Ascending aorta (tissue), 2 donors: ENCODE measurements at regions of chr11 and their contacts with region 1.

Region 1: DNA sequence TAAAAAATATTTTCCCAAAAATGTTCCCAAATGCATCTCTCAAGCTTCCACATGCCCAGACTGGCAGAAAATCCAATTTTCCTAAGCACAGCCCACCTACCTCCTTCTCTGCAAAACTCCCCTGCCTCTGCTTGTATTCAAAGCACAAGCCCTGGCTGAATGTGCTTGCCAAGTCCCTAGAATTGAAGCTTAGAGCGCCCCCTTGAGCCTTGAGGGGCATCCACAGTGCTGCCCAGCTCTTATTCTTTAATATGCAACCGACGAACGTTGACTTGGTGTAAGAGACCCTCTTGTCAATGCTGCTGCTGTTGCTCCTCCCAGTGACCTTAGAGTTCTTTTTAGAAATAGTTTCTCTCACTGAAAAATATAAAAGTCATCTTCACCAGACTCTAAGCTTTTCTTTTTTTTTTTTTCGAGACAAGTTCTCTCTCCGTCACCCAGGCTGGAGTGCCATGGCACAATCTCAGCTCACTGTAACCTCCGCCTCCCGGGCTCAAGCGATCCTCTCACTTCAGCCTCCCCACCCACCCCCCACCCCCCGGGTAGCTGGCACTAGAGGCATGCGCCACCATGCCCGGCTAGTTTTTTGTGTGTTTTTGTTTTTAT is 63.5 kb upstream of the CAPRIN1 start:
- DNase-seq: peak; percentile 27 to 74
- H3K4me3 ChIP-seq: no peak overlapping the region
- H3K27ac ChIP-seq: no peak overlapping the region
- H3K4me1 ChIP-seq: no peaks in the 10 kb centered on the region
- H3K27me3 ChIP-seq: no peaks in the 10 kb centered on the region
- CTCF ChIP-seq: peak; percentile 56 to 74 (median 59)

Region 2: GRCh38 chr11:33808228-33808828 is 179.8 kb before region 1 on chr11:
- intact Hi-C with region 1: loop called (anchors 5 kb)
- DNase-seq: peak in 1 of 2 donors; percentile 91
- H3K4me3 ChIP-seq: no peak overlapping the region
- H3K27ac ChIP-seq: no peak overlapping the region
- H3K4me1 ChIP-seq: no peaks in the 10 kb centered on the region
- H3K27me3 ChIP-seq: no peaks in the 10 kb centered on the region
- CTCF ChIP-seq: peak; percentile 75 to 89 (median 86)